ENCODE measurements at regions of chr12 and their contacts with region 1.

Region 1: GRCh38 chr12:120580787-120581723 is at the start of gene POP5:
- DNase-seq: peak; percentile 97
- H3K4me3 Mint-ChIP-seq: peak within 1 kb of the TSS; percentile 98
- H3K27ac Mint-ChIP-seq: peak within 1 kb of the TSS; percentile 89
- H3K4me1 Mint-ChIP-seq: peaks cover 41% of the 10 kb centered on the region
- H3K27me3 Mint-ChIP-seq: peaks cover 8% of the 10 kb centered on the region
- total RNA-seq, gene POP5: 44.2 to 45.0 TPM

Region 2: DNA sequence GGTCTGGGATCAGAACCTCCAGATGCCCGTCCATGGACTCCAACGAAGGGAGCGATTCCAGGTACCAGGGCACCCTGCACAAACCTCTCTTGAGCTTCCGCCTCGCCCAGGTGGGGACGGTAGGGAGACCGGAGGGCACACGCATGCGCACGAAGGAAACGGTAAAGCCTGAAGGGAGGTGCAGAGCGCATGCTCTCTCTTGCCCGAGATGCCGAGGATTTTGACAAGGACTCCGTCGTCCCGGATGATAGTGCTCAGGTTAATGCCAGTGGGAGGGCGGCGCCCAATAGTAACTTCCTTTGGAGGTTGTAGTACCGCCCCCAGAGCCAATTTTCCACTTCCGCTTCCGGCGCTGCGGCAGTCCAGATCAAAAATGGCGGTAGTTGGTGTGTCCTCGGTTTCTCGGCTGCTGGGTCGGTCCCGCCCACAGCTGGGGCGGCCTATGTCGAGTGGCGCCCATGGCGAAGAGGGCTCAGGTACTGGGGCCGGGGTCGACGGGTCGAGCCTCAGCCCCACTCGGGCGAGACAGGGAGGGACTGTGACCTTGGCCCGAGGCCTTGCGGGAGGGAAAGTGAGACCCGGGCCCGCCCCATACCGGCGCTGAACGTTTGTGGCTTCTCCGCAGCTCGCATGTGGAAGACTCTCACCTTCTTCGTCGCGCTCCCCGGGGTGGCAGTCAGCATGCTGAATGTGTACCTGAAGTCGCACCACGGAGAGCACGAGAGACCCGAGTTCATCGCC is 143.1 kb before region 1 on chr12 and contains the start of gene COX6A1:
- CTCF ChIA-PET with region 1: interaction called, 5 read pairs
- intact Hi-C with region 1: loop called (anchors 1 kb)
- DNase-seq: peak; percentile 99
- H3K4me3 Mint-ChIP-seq: peak within 1 kb of the TSS; percentile 92
- H3K27ac Mint-ChIP-seq: peak within 1 kb of the TSS; percentile 93
- H3K4me1 Mint-ChIP-seq: peaks cover 22% of the 10 kb centered on the region
- H3K27me3 Mint-ChIP-seq: no peaks in the 10 kb centered on the region
- total RNA-seq, gene COX6A1: 536 to 540 TPM

Region 3: GRCh38 chr12:120534203-120534702 is 46.8 kb before region 1 on chr12 and contains the start of gene RNF10:
- CTCF ChIA-PET with region 1: interaction called, 5 read pairs
- intact Hi-C with region 1: loop called (anchors 1 kb)
- DNase-seq: peak; percentile 78
- H3K4me3 Mint-ChIP-seq: peak within 1 kb of the TSS; percentile 92
- H3K27ac Mint-ChIP-seq: peak within 1 kb of the TSS; percentile 94
- H3K4me1 Mint-ChIP-seq: peaks cover 47% of the 10 kb centered on the region
- H3K27me3 Mint-ChIP-seq: no peaks in the 10 kb centered on the region
- total RNA-seq, gene RNF10: 159 to 166 TPM

Region 4: GRCh38 chr12:120710031-120710804 is 129.2 kb after region 1 on chr12 and contains the start of gene UNC119B:
- CTCF ChIA-PET with region 1: interaction called, 20 read pairs
- intact Hi-C with region 1: loop called (anchors 1 kb)
- DNase-seq: peak; percentile 73
- H3K4me3 Mint-ChIP-seq: peak within 1 kb of the TSS; percentile 85
- H3K27ac Mint-ChIP-seq: peak within 1 kb of the TSS; percentile 84
- H3K4me1 Mint-ChIP-seq: peaks cover 32% of the 10 kb centered on the region
- H3K27me3 Mint-ChIP-seq: no peaks in the 10 kb centered on the region
- total RNA-seq, gene UNC119B: 31.9 to 32.6 TPM

Region 5: DNA sequence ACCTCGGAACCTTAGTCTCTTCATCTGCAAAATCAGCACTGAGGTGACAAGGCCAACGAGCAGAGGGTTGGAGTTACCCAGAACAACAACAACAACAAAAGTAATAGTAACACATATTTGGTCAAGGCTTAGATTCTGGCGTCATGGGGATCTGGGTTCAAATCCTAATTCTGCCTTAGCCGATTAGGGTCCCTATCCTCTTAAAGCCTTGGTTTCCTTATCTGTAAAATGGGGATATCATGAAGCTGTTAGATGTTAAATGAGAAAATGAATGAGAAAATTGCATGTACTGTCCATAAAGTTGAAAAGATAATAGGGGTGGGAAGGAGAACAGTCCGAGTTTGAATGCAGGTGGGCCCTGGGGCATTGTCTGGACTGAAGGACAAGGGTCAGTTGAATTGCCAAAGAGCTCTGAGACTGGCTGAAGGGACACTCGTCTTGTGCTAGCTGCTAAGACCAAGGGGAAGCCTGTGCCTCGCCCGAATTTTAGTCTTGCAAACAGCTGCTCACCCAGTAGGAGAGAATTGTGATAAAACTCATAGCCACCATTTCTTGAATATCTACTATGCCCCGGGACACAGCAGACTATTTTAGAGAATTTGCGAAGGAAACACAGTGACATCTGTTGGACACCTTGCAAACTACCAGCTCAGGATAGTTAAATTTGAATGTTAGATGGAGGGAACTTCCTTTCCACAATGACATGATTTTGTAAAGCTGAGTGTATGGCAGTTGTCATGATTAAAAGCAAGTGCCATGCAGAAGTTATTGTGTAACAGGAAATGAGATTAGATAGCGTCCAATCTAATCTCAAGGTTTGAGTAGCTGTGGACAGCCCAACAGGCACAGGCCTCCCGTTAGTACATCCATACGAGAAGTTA is 390.5 kb after region 1 on chr12:
- CTCF ChIA-PET with region 1: interaction called, 9 read pairs
- intact Hi-C with region 1: loop called (anchors 1 kb)
- DNase-seq: peak; percentile 62
- H3K4me3 Mint-ChIP-seq: no peak overlapping the region
- H3K27ac Mint-ChIP-seq: no peak overlapping the region
- H3K4me1 Mint-ChIP-seq: peaks cover 4% of the 10 kb centered on the region
- H3K27me3 Mint-ChIP-seq: no peaks in the 10 kb centered on the region

Region 6: DNA sequence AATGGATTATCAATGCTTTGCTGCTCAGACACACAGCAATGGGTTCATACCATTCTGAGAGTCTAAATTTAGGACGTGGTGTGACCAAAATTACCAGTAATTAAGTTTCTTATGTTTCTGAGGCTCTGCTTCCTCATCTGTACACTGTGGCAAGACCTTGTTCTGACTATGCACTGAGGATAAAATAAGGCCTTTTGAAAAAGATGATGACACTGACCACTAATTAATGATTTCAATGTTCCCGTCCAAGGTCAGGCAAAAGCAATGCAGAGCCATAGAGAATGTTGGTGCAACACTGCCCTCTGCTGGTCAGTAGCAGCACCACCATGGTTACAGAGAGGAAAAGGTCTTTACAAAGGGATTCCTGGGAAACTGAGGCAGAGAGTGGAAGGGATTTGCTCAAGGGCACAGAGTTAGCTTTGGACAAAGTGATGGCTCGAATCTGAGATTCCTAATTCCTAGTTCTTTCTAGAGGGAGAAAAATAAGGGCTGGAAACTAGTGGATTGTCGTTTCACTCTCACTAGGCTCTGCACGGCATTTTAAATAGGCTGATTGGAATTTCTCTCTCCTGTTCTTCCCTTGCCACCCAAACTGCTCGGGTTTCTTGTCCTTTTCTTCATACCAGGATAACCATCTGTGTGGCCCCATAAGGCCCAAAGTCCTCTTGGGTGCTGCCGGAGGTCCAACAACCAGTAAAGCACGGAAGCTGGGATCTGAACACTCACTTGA is 529.3 kb after region 1 on chr12:
- CTCF ChIA-PET with region 1: no interaction called
- intact Hi-C with region 1: loop called (anchors 1 kb)
- DNase-seq: peak; percentile 80
- H3K4me3 Mint-ChIP-seq: no peak overlapping the region
- H3K27ac Mint-ChIP-seq: no peak overlapping the region
- H3K4me1 Mint-ChIP-seq: peaks cover 4% of the 10 kb centered on the region
- H3K27me3 Mint-ChIP-seq: no peaks in the 10 kb centered on the region